Mammary epithelial cell (primary cell): ENCODE measurements at regions of chr2 and their contacts with region 1.

Region 1: GRCh38 chr2:234951664-234952269 is at the start of gene SH3BP4:
- DNase-seq: peak; percentile 66
- H3K4me3 ChIP-seq: peak within 1 kb of the TSS; percentile 79 to 93 (median 82)
- H3K27ac ChIP-seq: peak within 1 kb of the TSS; percentile 100
- H3K4me1 ChIP-seq: peaks cover 41% of the 10 kb centered on the region
- H3K27me3 ChIP-seq: no peaks in the 10 kb centered on the region
- CTCF ChIP-seq: no peak
- total RNA-seq, gene SH3BP4: 54.6 to 63.0 TPM

Region 2: GRCh38 chr2:234550511-234551107 is 401.2 kb before region 1 on chr2:
- CTCF ChIA-PET with region 1: no interaction called
- dilution Hi-C with region 1: no loop called
- in situ Hi-C with region 1: loop called in 1 of 2 experiments (anchors 5 kb)
- intact Hi-C with region 1: loop called (anchors 2 kb)
- DNase-seq: peak; percentile 62
- H3K4me3 ChIP-seq: no peak overlapping the region
- H3K27ac ChIP-seq: no peak overlapping the region
- H3K4me1 ChIP-seq: peaks cover 5% of the 10 kb centered on the region
- H3K27me3 ChIP-seq: no peaks in the 10 kb centered on the region
- CTCF ChIP-seq: peak; percentile 90 to 96

Region 3: DNA sequence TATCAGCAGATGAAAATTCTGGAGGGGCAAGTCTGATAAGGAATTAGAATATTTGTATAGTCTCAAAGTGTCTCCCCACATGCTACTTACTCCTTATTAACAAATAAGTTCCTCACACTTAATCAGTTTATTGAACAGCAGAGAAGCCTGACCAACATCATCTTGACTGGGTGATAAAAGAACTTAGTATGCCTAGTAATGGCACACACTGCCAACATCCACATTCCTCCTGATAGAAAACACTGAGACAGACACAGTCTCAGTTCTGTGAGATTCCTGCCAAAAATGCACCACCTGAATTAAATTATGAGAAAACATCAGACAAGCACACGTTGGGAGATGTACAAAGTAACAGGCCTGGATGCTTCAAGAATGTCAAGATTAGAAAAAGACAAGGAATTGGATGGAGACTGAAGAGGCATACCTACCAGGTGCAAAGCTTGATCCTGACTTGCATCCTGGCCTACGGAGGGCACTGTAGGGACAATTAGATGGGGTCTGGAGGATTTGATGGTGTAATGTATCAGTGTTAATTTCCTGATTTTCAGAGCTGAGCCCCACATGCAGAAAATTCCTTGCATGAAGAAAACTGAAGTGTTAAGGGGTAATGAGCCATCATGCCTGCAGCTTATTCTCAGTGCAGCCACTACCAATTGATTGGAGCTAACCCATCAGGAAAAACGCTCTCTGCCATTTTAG is 200.3 kb before region 1 on chr2:
- CTCF ChIA-PET with region 1: no interaction called
- dilution Hi-C with region 1: no loop called
- in situ Hi-C with region 1: no loop called
- intact Hi-C with region 1: loop called (anchors 5 kb)
- DNase-seq: no peak
- H3K4me3 ChIP-seq: no peak overlapping the region
- H3K27ac ChIP-seq: no peak overlapping the region
- H3K4me1 ChIP-seq: no peaks in the 10 kb centered on the region
- H3K27me3 ChIP-seq: no peaks in the 10 kb centered on the region
- CTCF ChIP-seq: peak in 1 of 2 donors; percentile 32

Region 4: DNA sequence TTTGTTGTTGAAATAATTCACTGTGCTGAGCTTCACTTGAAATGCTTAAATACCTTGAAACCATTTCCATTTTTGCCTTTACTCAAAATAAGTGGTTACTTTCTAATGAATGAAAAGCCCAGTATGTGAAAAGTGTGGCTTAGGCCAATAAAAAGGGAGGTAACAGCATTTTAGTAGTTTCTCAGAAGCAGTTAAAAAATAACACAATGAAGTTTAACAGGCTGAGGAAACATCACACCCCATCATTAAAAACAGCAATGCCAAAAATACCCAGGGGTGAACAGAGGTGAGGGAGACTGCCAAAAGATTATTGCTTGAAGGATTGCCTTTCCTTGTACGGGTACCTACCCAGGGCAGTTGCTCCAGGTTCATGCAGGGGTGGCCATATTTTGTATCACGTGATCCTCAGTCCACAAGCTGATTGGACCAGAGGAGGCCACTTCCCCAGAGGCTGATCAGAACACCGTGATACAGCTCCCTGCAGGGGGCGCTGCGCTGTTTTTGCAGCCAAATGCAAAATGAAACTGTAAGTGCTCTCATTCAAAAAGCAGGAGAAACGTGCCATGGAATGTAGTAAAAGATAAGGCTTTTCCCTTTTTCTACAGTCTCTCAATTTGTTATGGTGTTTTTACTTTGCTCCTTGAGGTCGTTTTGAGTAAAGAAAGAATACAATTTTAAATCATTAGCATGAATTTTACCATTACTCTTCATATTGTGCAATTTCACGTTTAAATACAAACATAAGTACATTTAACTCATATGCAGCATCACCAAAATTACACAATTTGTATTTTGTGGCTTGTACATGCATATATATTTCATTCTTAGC is 70.1 kb before region 1 on chr2:
- CTCF ChIA-PET with region 1: no interaction called
- dilution Hi-C with region 1: no loop called
- in situ Hi-C with region 1: no loop called
- intact Hi-C with region 1: loop called (anchors 2 kb)
- DNase-seq: peak; percentile 70
- H3K4me3 ChIP-seq: no peak overlapping the region
- H3K27ac ChIP-seq: no peak overlapping the region
- H3K4me1 ChIP-seq: peaks cover 22% of the 10 kb centered on the region
- H3K27me3 ChIP-seq: no peaks in the 10 kb centered on the region
- CTCF ChIP-seq: peak; percentile 67 to 79

Region 5: GRCh38 chr2:235026649-235027557 is 75.1 kb after region 1 on chr2:
- CTCF ChIA-PET with region 1: no interaction called
- dilution Hi-C with region 1: no loop called
- in situ Hi-C with region 1: loop called in 1 of 2 experiments (anchors 10 kb)
- intact Hi-C with region 1: loop called (anchors 1 kb)
- DNase-seq: peak; percentile 99
- H3K4me3 ChIP-seq: peak overlapping the region in 2 of 3 experiments; percentile 35 to 40
- H3K27ac ChIP-seq: peak overlapping the region; percentile 99
- H3K4me1 ChIP-seq: peaks cover 60% of the 10 kb centered on the region
- H3K27me3 ChIP-seq: no peaks in the 10 kb centered on the region
- CTCF ChIP-seq: no peak

Region 6: GRCh38 chr2:235042543-235043515 is 91.1 kb after region 1 on chr2:
- CTCF ChIA-PET with region 1: no interaction called
- dilution Hi-C with region 1: no loop called
- in situ Hi-C with region 1: no loop called
- intact Hi-C with region 1: no loop called
- DNase-seq: no peak
- H3K4me3 ChIP-seq: no peak overlapping the region
- H3K27ac ChIP-seq: no peak overlapping the region
- H3K4me1 ChIP-seq: no peaks in the 10 kb centered on the region
- H3K27me3 ChIP-seq: no peaks in the 10 kb centered on the region
- CTCF ChIP-seq: no peak

Region 7: DNA sequence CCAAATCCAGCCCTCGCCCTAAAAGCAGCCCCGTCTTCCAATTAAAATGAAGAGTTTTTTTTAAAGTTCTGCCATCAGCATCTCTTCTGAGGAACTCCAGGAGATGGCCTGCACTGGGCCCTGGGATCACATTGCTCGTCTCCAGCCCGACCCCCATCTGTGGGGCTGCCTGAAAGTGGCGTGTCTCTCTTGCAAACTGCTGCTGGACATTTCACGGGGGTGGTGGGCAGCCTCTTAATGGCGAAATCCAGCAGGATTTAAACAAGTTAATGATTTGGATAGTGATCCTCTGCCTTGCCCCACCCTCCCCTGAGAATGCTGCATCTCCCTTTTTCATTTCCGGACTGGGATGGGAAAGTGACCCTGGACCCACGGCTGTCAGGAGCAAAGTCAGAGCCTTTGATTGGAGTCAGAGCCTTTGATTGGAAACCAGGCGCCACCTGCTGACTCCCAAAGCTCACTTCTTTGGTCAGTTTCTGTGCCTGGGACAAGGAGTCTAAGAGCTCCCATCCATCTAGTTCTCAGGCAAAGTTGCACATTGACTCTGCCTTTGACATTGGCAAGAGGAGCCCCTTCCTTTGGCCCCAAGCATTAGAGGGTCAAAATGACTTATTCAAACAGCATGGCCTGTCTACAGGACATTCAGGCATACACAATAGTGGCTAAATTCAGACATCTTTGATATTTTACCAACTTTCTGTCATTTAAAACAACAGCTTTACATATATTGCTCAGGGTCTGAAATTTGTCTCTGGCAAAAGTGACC is 155.3 kb after region 1 on chr2:
- CTCF ChIA-PET with region 1: no interaction called
- dilution Hi-C with region 1: no loop called
- in situ Hi-C with region 1: no loop called
- intact Hi-C with region 1: loop called (anchors 2 kb)
- DNase-seq: peak; percentile 52
- H3K4me3 ChIP-seq: no peak overlapping the region
- H3K27ac ChIP-seq: no peak overlapping the region
- H3K4me1 ChIP-seq: no peaks in the 10 kb centered on the region
- H3K27me3 ChIP-seq: peaks cover 4% of the 10 kb centered on the region
- CTCF ChIP-seq: peak; percentile 58 to 90